ENCODE measurements at regions of chr6 and their contacts with region 1.

Region 1: GRCh38 chr6:33579828-33580714 is at the start of gene BAK1:
- DNase-seq: peak; percentile 72
- ATAC-seq: peak; percentile 97
- H3K4me3 Mint-ChIP-seq: peak within 1 kb of the TSS; percentile 88
- H3K27ac Mint-ChIP-seq: peak within 1 kb of the TSS; percentile 89
- H3K4me1 Mint-ChIP-seq: peaks cover 45% of the 10 kb centered on the region
- H3K27me3 Mint-ChIP-seq: no peaks in the 10 kb centered on the region
- CTCF ChIP-seq: no peak
- total RNA-seq, gene BAK1: 29.5 and 29.6 TPM in 2 replicates

Region 2: DNA sequence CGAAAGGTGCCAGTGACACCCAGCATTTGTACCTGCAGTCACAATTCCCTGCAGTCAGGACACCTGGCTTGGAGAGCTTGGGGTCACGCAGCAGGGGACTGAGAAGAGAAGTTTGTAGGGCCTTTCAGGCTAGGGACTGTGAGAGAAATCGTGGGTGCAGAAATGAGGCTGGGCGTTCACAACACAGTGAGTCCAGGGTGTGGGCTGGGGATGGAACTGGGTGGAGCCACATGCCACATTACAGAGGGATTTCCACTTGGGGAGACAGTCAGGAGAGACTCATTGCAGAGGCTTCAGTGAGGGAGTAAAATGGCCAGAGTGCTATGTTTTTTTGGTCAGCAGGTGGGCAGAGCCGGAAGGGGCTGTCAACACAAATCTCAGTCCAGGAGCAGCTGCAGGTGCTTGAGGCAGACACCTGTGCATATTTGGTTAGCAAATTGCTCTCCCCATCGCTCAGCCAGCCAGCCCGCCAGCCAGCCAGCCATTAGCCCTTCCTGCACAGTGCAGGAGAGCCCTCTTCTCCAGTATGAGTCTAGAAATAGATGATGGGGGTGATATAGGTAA is 48.4 kb after region 1 on chr6:
- CTCF ChIA-PET with region 1: no interaction called
- POLR2A ChIA-PET with region 1: no interaction called
- intact Hi-C with region 1: no loop called
- DNase-seq: no peak
- ATAC-seq: no peak
- H3K4me3 Mint-ChIP-seq: no peak overlapping the region
- H3K27ac Mint-ChIP-seq: peak overlapping the region; percentile 3
- H3K4me1 Mint-ChIP-seq: peaks cover 56% of the 10 kb centered on the region
- H3K27me3 Mint-ChIP-seq: no peaks in the 10 kb centered on the region
- CTCF ChIP-seq: no peak

Region 3: DNA sequence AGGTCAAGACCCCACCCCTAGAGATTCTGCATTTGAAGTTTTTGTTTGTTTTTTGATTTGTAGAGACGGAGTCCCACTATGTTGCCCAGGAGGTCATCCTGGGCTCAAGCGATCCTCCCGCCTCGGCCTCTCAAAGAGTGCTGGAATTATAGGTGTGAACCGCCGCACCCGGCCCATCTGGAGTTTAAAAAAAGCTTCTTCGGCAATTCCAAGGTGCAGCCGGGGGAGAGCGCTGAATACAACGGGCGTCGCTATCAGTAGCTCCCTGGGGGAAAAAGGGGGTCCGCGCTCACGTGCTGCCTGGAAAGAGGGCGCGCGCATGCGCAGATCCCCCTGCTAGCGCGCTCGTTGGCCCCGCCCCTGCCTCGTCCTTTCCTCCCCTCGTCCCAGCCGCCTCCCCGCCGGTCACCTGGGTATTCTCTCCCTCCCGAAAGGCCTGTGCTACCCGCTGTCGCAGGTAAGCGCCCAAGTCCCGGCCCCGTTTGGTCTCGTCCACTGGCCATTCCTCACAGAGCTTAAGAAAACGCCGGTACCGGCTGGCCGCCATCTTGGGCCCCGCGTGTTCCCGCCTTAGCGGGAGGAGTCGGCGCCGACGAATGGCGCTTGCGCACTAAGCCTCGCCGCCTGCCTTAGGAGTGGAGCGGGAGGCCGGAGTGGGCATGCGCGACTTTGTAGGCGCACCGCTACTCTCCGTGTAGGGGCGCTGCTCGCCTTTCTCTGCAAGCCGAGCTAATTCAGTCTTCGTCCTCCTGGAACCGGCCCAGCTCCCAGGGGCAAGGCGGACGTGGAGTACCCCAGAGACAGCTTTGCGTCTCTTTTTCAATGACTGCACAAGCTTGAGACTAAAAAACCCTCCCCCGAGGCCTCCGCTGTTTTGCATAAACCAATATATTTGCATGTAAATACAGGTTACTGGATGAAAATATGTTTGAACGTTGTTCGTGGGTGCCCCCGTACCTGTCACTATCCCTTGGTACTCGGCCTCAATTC is 131.4 kb after region 1 on chr6 and contains the start of gene UQCC2:
- CTCF ChIA-PET with region 1: no interaction called
- POLR2A ChIA-PET with region 1: interaction called, 13 read pairs
- intact Hi-C with region 1: no loop called
- DNase-seq: peak; percentile 93
- ATAC-seq: peak; percentile 86
- H3K4me3 Mint-ChIP-seq: peak within 1 kb of the TSS; percentile 98
- H3K27ac Mint-ChIP-seq: peak within 1 kb of the TSS; percentile 99
- H3K4me1 Mint-ChIP-seq: peaks cover 29% of the 10 kb centered on the region
- H3K27me3 Mint-ChIP-seq: no peaks in the 10 kb centered on the region
- CTCF ChIP-seq: no peak
- total RNA-seq, gene UQCC2: 26.2 and 37.5 TPM in 2 replicates

Region 4: DNA sequence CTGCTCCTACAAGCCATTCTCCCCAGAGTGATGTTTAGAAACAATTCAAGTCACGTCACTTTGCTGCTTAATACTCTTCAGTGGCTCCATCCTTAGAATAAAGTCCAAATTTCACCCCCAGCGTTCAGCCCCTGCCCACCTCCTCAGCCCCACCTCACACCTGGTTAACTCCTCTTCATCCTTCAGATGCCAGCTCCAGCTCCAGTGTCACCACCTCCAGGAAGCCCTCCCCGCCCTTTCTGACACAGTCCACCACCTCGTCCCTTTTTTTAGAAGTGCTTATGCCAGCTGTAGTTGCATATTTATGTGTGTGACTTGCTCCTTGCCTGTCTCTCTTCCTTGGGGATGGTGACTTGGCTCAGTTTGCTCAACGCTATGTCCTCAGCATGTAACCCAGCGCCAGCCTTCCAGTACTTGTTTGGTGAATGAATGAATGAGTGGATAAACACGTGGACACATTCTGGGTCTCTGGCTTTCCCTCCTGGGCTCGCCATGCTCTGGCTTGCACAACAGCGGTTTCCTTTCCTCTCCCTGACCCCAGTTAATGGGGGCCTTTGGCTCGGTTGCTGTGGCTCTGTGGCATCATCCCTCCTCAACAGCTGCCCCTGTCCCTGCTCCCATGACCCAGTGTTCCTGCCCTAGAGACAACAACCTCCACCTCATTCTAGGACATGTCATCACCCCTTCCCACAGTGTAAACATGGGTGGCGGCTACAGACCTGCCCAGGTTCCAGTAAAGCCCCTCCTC is 170.3 kb after region 1 on chr6:
- CTCF ChIA-PET with region 1: no interaction called
- POLR2A ChIA-PET with region 1: no interaction called
- intact Hi-C with region 1: no loop called
- DNase-seq: no peak
- ATAC-seq: no peak
- H3K4me3 Mint-ChIP-seq: no peak overlapping the region
- H3K27ac Mint-ChIP-seq: no peak overlapping the region
- H3K4me1 Mint-ChIP-seq: peaks cover 7% of the 10 kb centered on the region
- H3K27me3 Mint-ChIP-seq: peaks cover 9% of the 10 kb centered on the region
- CTCF ChIP-seq: no peak